GM12878 (cell line): ENCODE measurements at regions of chr1 and their contacts with region 1.

Region 1: DNA sequence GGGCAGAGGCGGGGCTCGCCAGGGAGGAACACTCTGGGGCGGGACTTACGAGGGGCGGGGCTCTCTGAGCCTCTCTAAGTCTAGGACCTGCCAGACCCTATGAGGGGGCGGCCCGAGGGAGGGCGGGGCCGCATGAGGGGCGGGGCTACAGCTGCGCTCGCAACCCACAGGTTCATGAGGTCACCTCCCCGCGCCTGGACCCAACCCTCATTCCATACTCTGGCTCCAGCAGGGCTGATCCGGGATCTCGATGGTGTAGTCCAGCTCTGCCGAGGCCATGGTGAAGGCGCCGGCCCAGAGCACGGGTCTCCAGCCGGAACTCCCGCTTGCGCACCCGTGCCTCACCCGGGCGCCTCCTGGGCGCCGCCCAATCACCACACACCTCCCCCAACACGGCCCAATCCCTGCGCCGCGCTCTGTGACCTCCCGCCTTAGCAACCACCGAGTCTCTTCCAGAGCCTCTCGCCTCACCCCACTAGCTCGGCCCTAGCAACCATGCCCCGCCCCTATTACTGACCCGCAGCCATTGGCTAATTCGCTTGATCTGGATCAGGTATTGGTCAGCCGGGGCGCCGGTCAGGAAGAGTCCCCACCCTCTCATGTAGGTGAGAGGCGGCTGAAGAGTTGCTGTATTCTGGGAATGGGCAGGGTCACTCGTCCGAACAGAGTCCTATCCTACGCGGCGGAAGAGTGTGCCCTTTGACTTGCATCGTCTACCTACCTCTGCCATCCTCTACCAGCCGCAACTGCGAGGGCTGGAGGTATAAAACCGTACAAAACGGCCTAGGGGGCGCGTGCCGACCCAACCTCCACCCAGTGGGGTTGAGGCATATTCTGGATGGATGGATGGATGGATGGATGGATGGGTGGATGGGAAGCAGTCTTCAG is at the starts of genes ARMH1 and TMEM53:
- DNase-seq: peak; percentile 95
- ATAC-seq: peak; percentile 94
- H3K4me3 ChIP-seq: peak within 1 kb of the TSS; percentile 82
- H3K27ac ChIP-seq: peak within 1 kb of the TSS; percentile 83
- H3K4me1 ChIP-seq: peaks cover 64% of the 10 kb centered on the region
- H3K27me3 ChIP-seq: no peaks in the 10 kb centered on the region
- CTCF ChIP-seq: 0 out of 6 replicates have a peak, but pooled peaks of 1 of the 3 experiments have one; percentile 15
- EP300 ChIP-seq: no peak
- POLR2A ChIP-seq: peak; percentile 84
- RAD21 ChIP-seq: no peak
- polyA plus RNA-seq, gene ARMH1: 0.93 to 1.8 TPM
- polyA plus RNA-seq, gene TMEM53: 3.1 to 6.2 TPM

Region 2: GRCh38 chr1:44631647-44632539 is 42.5 kb before region 1 on chr1:
- CTCF ChIA-PET with region 1: no interaction called
- POLR2A ChIA-PET with region 1: interaction called, 13 read pairs
- RAD21 ChIA-PET with region 1: interaction called, 6 read pairs
- SMC1A ChIA-PET with region 1: interaction called, 3 read pairs
- in situ Hi-C with region 1: no loop called
- intact Hi-C with region 1: no loop called
- DNase-seq: peak; percentile 37
- ATAC-seq: peak; percentile 86
- H3K4me3 ChIP-seq: peak overlapping the region; percentile 98
- H3K27ac ChIP-seq: peak overlapping the region; percentile 94
- H3K4me1 ChIP-seq: no peaks in the 10 kb centered on the region
- H3K27me3 ChIP-seq: no peaks in the 10 kb centered on the region
- CTCF ChIP-seq: no peak
- EP300 ChIP-seq: no peak
- POLR2A ChIP-seq: peak; percentile 91
- RAD21 ChIP-seq: no peak

Region 3: DNA sequence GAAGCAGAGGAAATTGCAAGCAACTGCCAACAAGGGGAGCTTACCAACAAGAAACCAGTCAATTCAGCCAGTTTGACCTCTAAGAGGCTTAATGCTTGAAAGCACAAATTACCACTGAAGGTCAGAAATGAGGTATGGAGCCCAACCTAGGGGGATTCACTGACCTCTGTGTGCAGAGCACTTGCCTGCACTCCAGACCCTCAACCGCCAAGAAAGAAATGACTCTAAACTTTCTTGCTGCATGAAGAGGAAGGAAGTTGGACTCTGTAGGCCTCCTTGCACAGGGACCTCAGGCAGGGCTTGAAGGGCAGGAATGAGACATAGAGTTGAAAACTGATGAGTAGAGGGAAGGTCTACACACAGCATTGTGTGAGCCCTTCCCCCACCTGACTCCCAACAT is 10.2 kb after region 1 on chr1:
- CTCF ChIA-PET with region 1: interaction called, 17 read pairs
- POLR2A ChIA-PET with region 1: interaction called, 29 read pairs
- RAD21 ChIA-PET with region 1: interaction called, 11 read pairs
- SMC1A ChIA-PET with region 1: interaction called, 15 read pairs
- in situ Hi-C with region 1: no loop called
- intact Hi-C with region 1: no loop called
- DNase-seq: peak; percentile 81
- ATAC-seq: peak; percentile 96
- H3K4me3 ChIP-seq: no peak overlapping the region
- H3K27ac ChIP-seq: peak overlapping the region; percentile 77
- H3K4me1 ChIP-seq: peaks cover 20% of the 10 kb centered on the region
- H3K27me3 ChIP-seq: no peaks in the 10 kb centered on the region
- CTCF ChIP-seq: peak in 1 of 3 experiments; percentile 22; a peak in 1 of 6 replicates
- EP300 ChIP-seq: peak in 1 of 2 experiments; percentile 32; a peak in 2 of 4 replicates
- POLR2A ChIP-seq: no peak
- RAD21 ChIP-seq: peak; percentile 33; the same call in 1 of the 2 replicates

Region 4: DNA sequence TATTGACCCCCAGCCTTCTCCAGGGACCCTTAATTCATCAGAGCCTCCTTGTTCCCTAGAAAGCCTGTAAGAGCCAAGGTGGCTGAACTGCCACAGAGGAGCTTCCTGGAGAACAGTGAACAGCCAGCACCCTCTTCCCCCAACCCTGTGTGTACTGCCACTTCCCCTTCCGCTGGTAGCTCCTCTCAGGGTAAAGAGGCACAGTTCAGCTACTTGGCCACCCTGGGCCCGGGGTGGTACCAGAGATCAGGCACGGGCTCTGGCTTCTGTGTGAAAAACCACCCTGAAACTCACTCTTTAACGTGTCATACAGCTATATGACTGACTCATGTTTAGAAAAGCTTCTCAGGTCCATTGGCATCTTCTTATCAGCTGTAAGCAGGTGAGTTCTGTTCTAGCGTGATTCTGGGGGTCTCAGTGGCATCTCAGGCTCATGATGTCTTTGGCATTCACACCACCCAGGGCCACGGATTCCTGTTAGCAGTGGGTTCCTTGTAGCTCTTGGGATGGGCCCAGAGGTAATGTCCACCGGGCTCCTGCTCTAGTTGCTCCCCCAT is 22.5 kb after region 1 on chr1:
- CTCF ChIA-PET with region 1: interaction called, 16 read pairs
- POLR2A ChIA-PET with region 1: interaction called, 12 read pairs
- RAD21 ChIA-PET with region 1: interaction called, 8 read pairs
- SMC1A ChIA-PET with region 1: interaction called, 76 read pairs
- in situ Hi-C with region 1: no loop called
- intact Hi-C with region 1: no loop called
- DNase-seq: no peak
- ATAC-seq: peak; percentile 74
- H3K4me3 ChIP-seq: no peak overlapping the region
- H3K27ac ChIP-seq: peak overlapping the region; percentile 45
- H3K4me1 ChIP-seq: peaks cover 51% of the 10 kb centered on the region
- H3K27me3 ChIP-seq: no peaks in the 10 kb centered on the region
- CTCF ChIP-seq: no peak
- EP300 ChIP-seq: no peak
- POLR2A ChIP-seq: 0 out of 2 replicates have a peak, but pooled peaks have one; percentile 24
- RAD21 ChIP-seq: no peak

Region 5: GRCh38 chr1:44714944-44715571 is 40.7 kb after region 1 on chr1:
- CTCF ChIA-PET with region 1: interaction called, 6 read pairs
- POLR2A ChIA-PET with region 1: interaction called, 3 read pairs
- RAD21 ChIA-PET with region 1: interaction called, 3 read pairs
- SMC1A ChIA-PET with region 1: interaction called, 6 read pairs
- in situ Hi-C with region 1: no loop called
- intact Hi-C with region 1: loop called (anchors 2 kb)
- DNase-seq: peak; percentile 71
- ATAC-seq: peak; percentile 75
- H3K4me3 ChIP-seq: no peak overlapping the region
- H3K27ac ChIP-seq: peak overlapping the region; percentile 61
- H3K4me1 ChIP-seq: peaks cover 56% of the 10 kb centered on the region
- H3K27me3 ChIP-seq: no peaks in the 10 kb centered on the region
- CTCF ChIP-seq: peak; percentile 89 to 96 (median 90)
- EP300 ChIP-seq: no peak
- POLR2A ChIP-seq: no peak
- RAD21 ChIP-seq: peak; percentile 75

Region 6: DNA sequence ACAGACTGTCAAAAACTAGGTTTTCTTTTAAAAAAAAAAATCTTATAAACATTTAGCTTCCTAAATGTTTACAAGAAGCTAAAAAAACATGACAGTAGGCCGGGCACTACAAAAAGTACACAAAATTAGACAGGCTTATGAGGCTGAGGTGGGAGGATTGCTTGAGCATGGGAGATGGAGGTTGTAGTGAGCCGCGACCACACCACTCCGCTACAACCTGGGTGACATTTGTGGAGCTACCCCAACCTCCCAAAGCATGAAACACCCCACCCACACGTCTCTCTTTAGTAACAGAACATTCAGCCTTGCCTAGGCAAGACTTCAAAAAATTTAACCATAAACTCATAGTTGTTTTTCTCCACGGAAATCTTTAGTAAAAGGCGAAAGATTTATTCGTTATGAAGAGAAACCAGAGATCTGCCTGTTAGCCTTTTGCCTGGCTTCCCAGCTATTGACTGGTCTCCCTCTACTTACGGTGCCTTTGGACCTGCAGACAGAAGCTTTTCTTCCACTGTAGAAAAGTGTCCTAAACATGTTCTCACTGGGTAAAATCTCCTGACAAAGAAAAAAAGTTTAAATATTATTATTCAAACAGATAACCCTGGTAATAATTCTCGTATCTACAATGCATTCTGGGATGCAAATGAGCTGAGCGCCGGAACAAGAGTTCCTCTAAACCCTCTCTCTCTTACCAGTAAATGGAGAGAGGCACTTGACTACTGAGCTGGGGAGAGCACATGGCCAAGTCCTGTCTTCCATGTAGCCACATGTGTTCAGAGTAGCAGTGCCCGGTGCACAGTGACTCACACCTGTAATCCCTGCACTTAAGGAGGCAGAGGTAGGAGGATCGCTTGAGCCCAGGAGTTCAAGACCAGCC is 47.4 kb after region 1 on chr1:
- CTCF ChIA-PET with region 1: interaction called, 9 read pairs
- POLR2A ChIA-PET with region 1: interaction called, 13 read pairs
- RAD21 ChIA-PET with region 1: interaction called, 10 read pairs
- SMC1A ChIA-PET with region 1: interaction called, 6 read pairs
- in situ Hi-C with region 1: no loop called
- intact Hi-C with region 1: no loop called
- DNase-seq: peak; percentile 99
- ATAC-seq: peak; percentile 91
- H3K4me3 ChIP-seq: no peak overlapping the region
- H3K27ac ChIP-seq: peak overlapping the region; percentile 99
- H3K4me1 ChIP-seq: peaks cover 49% of the 10 kb centered on the region
- H3K27me3 ChIP-seq: no peaks in the 10 kb centered on the region
- CTCF ChIP-seq: peak in 1 of 3 experiments; percentile 16; a peak in 1 of 6 replicates
- EP300 ChIP-seq: no peak
- POLR2A ChIP-seq: peak; percentile 97
- RAD21 ChIP-seq: peak; percentile 18; the same call in 1 of the 2 replicates

Region 7: DNA sequence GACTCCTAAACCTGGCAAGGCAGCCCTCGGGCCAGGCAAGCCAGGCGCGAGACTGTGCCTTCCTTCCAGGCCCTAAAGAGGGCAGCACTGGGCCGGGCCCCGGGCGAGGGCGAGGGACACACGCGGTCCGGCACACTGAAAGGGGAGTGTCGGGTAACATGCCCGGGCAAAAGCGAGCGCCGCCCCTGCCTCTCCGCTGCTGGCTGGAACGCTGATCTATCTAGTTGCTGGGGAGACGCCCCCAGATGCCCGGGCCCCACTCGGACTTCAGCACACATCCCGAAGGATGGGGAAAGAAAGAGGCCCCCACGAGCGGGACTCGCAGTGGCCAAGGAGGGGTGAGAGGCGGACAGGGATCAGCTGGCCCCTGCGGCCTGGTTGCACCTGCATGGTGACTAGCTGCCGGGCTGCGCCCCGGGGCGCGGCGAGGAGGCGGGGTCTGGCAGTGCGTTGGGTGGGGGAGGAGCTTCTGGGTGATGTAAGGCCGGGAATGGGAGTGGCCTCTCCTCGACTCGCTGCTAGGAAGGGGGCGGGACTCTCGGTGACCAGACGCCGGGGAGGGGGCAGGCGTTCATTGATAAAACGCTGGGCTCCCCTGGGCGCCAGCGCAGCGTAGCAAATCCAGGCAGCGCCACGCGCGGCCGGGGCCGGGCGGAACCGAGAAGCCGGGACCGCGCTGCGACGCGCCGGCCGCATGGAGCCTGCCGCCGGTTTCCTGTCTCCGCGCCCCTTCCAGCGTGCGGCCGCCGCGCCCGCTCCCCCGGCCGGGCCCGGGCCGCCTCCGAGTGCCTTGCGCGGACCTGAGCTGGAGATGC is 125.6 kb after region 1 on chr1 and contains the start of gene PLK3:
- CTCF ChIA-PET with region 1: no interaction called
- POLR2A ChIA-PET with region 1: no interaction called
- RAD21 ChIA-PET with region 1: no interaction called
- SMC1A ChIA-PET with region 1: no interaction called
- in situ Hi-C with region 1: no loop called
- intact Hi-C with region 1: no loop called
- DNase-seq: peak; percentile 91
- ATAC-seq: peak; percentile 91
- H3K4me3 ChIP-seq: peak within 1 kb of the TSS; percentile 94
- H3K27ac ChIP-seq: peak within 1 kb of the TSS; percentile 84
- H3K4me1 ChIP-seq: peaks cover 11% of the 10 kb centered on the region
- H3K27me3 ChIP-seq: no peaks in the 10 kb centered on the region
- CTCF ChIP-seq: peak; percentile 92 to 97 (median 95)
- EP300 ChIP-seq: no peak
- POLR2A ChIP-seq: peak; percentile 90
- RAD21 ChIP-seq: peak; percentile 86
- polyA plus RNA-seq, gene PLK3: 1.5 to 1.9 TPM